PC-3 (cell line): ENCODE measurements at regions of chr21 and their contacts with region 1.

Region 1: GRCh38 chr21:15192243-15192642 is 127.4 kb upstream of the NRIP1 start:
- DNase-seq: peak; percentile 99
- ATAC-seq: peak; percentile 77
- H3K4me3 ChIP-seq: peak overlapping the region; percentile 58
- H3K27ac ChIP-seq: peak overlapping the region; percentile 95
- H3K4me1 ChIP-seq: peaks cover 27% of the 10 kb centered on the region
- H3K27me3 ChIP-seq: no peaks in the 10 kb centered on the region
- CTCF ChIP-seq: no peak

Region 2: GRCh38 chr21:14877570-14878228 is 314.5 kb before region 1 on chr21:
- CTCF ChIA-PET with region 1: no interaction called
- POLR2A ChIA-PET with region 1: no interaction called
- intact Hi-C with region 1: loop called (anchors 5 kb)
- DNase-seq: peak; percentile 97
- ATAC-seq: peak; percentile 62
- H3K4me3 ChIP-seq: peak overlapping the region; percentile 35
- H3K27ac ChIP-seq: peak overlapping the region; percentile 94
- H3K4me1 ChIP-seq: peaks cover 88% of the 10 kb centered on the region
- H3K27me3 ChIP-seq: no peaks in the 10 kb centered on the region
- CTCF ChIP-seq: no peak

Region 3: GRCh38 chr21:15064576-15065391 is 127.5 kb before region 1 on chr21 and contains the start of gene NRIP1:
- CTCF ChIA-PET with region 1: no interaction called
- POLR2A ChIA-PET with region 1: no interaction called
- intact Hi-C with region 1: loop called (anchors 1 kb)
- DNase-seq: peak; percentile 89
- ATAC-seq: peak; percentile 64
- H3K4me3 ChIP-seq: peak within 1 kb of the TSS; percentile 85
- H3K27ac ChIP-seq: peak within 1 kb of the TSS; percentile 72
- H3K4me1 ChIP-seq: peaks cover 27% of the 10 kb centered on the region
- H3K27me3 ChIP-seq: no peaks in the 10 kb centered on the region
- CTCF ChIP-seq: no peak
- total RNA-seq, gene NRIP1: 68.0 and 69.2 TPM in 2 replicates

Region 4: GRCh38 chr21:15152591-15152990 is 39.7 kb before region 1 on chr21:
- CTCF ChIA-PET with region 1: no interaction called
- POLR2A ChIA-PET with region 1: no interaction called
- intact Hi-C with region 1: no loop called
- DNase-seq: no peak
- ATAC-seq: no peak
- H3K4me3 ChIP-seq: no peak overlapping the region
- H3K27ac ChIP-seq: no peak overlapping the region
- H3K4me1 ChIP-seq: no peaks in the 10 kb centered on the region
- H3K27me3 ChIP-seq: no peaks in the 10 kb centered on the region
- CTCF ChIP-seq: no peak

Region 5: GRCh38 chr21:15210235-15210739 is 18.0 kb after region 1 on chr21:
- CTCF ChIA-PET with region 1: no interaction called
- POLR2A ChIA-PET with region 1: no interaction called
- intact Hi-C with region 1: no loop called
- DNase-seq: peak; percentile 94
- ATAC-seq: peak; percentile 75
- H3K4me3 ChIP-seq: no peak overlapping the region
- H3K27ac ChIP-seq: peak overlapping the region; percentile 81
- H3K4me1 ChIP-seq: peaks cover 35% of the 10 kb centered on the region
- H3K27me3 ChIP-seq: no peaks in the 10 kb centered on the region
- CTCF ChIP-seq: no peak

Region 6: DNA sequence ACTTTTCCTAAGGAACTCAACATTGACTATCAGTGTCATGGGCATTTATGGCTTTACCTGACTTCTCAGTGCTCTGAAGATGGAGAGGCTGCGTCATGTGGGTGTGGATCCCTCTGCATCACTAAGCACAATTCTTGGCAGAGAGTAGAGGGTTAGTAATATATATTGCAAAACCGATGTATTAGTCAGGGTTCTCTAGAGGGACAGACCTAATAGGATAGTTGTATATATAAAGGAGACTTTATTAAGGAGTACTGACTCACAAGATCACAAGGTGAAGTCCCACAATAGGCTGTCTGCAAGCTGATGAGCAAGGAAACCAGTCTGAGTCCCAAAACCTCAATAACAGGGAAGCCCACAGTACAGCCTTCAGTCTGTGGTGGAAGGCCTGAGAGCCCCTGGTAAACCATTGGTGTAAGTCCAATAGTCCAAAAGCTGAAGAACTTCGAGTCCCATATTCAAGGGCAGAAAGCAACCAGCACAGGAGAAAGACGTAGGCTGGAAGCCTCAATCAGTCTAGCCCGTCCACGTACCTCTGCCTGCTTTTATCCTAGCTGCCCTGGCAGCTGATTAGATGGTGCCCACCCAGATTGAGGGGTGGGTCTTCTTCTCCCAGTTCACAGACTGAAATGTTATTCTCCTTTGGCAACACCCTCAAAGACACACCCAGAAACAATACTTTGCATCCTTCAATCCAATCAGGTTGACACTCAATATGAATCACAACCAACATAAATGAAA is 32.3 kb after region 1 on chr21:
- CTCF ChIA-PET with region 1: no interaction called
- POLR2A ChIA-PET with region 1: no interaction called
- intact Hi-C with region 1: loop called (anchors 1 kb)
- DNase-seq: peak; percentile 99
- ATAC-seq: peak; percentile 97
- H3K4me3 ChIP-seq: no peak overlapping the region
- H3K27ac ChIP-seq: peak overlapping the region; percentile 93
- H3K4me1 ChIP-seq: peaks cover 42% of the 10 kb centered on the region
- H3K27me3 ChIP-seq: no peaks in the 10 kb centered on the region
- CTCF ChIP-seq: no peak

Region 7: DNA sequence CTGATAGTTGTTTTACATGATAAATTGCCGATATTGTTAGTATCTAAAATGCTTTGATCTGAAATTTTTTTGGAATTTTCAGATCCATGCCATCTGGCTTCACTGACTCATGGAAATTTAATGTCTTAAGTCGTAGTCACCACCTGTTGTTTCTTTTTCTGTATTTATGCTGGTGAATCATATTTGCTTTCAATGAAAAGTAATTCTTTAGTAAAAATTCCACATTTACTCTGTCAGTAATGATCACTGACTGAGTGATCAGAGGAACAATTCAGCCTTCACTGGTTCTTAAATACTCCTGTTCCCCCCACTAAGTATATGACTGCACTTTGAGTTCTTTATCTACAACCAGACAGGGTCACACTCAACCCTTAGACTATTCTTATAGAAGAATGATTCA is 58.1 kb after region 1 on chr21:
- CTCF ChIA-PET with region 1: no interaction called
- POLR2A ChIA-PET with region 1: no interaction called
- intact Hi-C with region 1: loop called (anchors 2 kb)
- DNase-seq: peak; percentile 92
- ATAC-seq: peak; percentile 82
- H3K4me3 ChIP-seq: no peak overlapping the region
- H3K27ac ChIP-seq: peak overlapping the region; percentile 78
- H3K4me1 ChIP-seq: peaks cover 52% of the 10 kb centered on the region
- H3K27me3 ChIP-seq: no peaks in the 10 kb centered on the region
- CTCF ChIP-seq: no peak

Region 8: DNA sequence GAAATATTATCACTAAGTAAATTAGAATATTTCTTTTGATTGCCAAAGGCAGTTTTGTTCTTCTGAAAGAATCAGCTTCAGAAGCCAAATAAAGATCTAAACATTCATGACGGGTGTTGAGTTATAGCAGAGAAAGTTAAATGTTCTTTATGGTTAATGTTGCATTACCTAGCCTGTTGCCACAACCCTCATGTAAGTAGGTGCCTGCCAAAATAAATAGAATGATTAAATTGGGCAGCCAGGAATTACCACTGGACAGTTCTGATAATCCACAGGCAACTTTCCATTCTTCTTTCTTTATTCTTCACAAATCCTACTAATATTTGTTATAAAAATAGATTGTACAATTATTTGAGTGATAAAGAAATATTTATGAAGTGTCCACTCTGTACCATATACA is 90.4 kb after region 1 on chr21:
- CTCF ChIA-PET with region 1: no interaction called
- POLR2A ChIA-PET with region 1: no interaction called
- intact Hi-C with region 1: loop called (anchors 5 kb)
- DNase-seq: peak; percentile 67
- ATAC-seq: peak; percentile 84
- H3K4me3 ChIP-seq: no peak overlapping the region
- H3K27ac ChIP-seq: peak overlapping the region; percentile 40
- H3K4me1 ChIP-seq: peaks cover 18% of the 10 kb centered on the region
- H3K27me3 ChIP-seq: no peaks in the 10 kb centered on the region
- CTCF ChIP-seq: no peak

Region 9: GRCh38 chr21:15483138-15483780 is 291.0 kb after region 1 on chr21:
- CTCF ChIA-PET with region 1: no interaction called
- POLR2A ChIA-PET with region 1: no interaction called
- intact Hi-C with region 1: loop called (anchors 1 kb)
- DNase-seq: peak; percentile 95
- ATAC-seq: peak; percentile 100
- H3K4me3 ChIP-seq: no peak overlapping the region
- H3K27ac ChIP-seq: no peak overlapping the region
- H3K4me1 ChIP-seq: peaks cover 16% of the 10 kb centered on the region
- H3K27me3 ChIP-seq: no peaks in the 10 kb centered on the region
- CTCF ChIP-seq: peak; percentile 96